ENCODE measurements at regions of chr6 and their contacts with region 1.

Region 1: DNA sequence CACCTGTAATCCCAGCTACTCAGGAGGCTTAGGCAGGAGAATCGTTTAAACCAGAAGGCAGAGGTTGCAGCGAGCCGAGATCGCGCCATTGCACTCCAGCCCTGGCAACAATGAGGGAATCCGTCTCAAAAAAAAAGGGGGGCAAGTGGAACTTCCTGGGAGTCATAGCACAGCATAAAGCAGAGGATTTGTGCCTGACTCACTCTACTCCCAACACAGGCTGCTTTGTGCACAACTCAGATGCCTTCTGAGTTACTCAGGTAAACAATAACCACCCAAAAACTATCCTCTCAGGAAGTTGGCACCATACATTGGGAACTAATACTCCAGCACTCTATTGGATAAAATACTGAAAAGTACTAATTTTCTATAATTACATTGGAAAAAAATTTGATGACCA is 2.5 kb upstream of the TMEM244 start:
- DNase-seq: no peak
- ATAC-seq: no peak
- H3K4me3 ChIP-seq: no peak overlapping the region
- H3K27ac ChIP-seq: no peak overlapping the region
- H3K4me1 ChIP-seq: no peaks in the 10 kb centered on the region
- H3K27me3 ChIP-seq: no peaks in the 10 kb centered on the region
- CTCF ChIP-seq: no peak
- EP300 ChIP-seq: no peak
- POLR2A ChIP-seq: no peak
- RAD21 ChIP-seq: no peak

Region 2: GRCh38 chr6:129567374-129567773 is 296.3 kb before region 1 on chr6:
- CTCF ChIA-PET with region 1: no interaction called
- POLR2A ChIA-PET with region 1: no interaction called
- in situ Hi-C with region 1: no loop called
- intact Hi-C with region 1: no loop called
- DNase-seq: peak; percentile 28 to 58 (median 34)
- ATAC-seq: peak; percentile 91
- H3K4me3 ChIP-seq: no peak overlapping the region
- H3K27ac ChIP-seq: no peak overlapping the region
- H3K4me1 ChIP-seq: peaks cover 0 to 7% of the 10 kb centered on the region in 2 experiments; a peak in 2 of 5 replicates
- H3K27me3 ChIP-seq: no peaks in the 10 kb centered on the region
- CTCF ChIP-seq: peak; percentile 40 to 71 (median 68); a peak in 5 of 6 replicates
- EP300 ChIP-seq: no peak
- POLR2A ChIP-seq: no peak
- RAD21 ChIP-seq: peak; percentile 66 to 81

Region 3: DNA sequence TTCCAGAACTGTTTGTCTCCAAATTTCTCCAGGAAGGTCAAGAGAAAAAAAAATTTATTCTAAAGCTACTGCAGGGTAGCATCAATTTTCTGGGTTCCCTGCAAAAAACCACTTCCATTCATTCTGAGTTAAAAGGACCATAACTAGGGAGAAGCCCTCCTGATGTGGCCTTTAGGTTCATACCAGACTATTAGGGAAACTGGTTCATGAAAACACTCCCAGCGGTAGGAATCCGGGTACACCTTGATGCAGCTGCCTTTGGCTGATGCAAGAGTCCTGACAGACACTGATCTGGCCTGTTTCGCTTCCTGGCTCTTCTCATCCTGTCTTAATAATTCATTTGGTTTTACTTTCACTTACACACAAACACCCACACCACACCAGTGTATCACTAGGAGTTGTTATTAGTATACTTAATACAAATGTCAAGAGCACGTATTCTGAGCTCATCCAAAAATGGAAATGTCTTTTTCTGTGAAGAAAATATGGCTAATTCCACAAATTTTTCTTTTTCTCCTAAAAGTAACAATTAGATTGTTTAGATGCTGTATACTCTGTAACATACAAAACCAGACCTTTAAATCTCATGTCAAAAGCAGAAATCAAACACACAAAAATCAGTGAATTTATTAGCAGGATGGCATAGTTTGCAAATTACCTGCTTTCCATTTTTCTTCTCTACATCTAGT is 115.3 kb before region 1 on chr6:
- CTCF ChIA-PET with region 1: no interaction called
- POLR2A ChIA-PET with region 1: no interaction called
- in situ Hi-C with region 1: no loop called
- intact Hi-C with region 1: loop called (anchors 1 kb)
- DNase-seq: peak; percentile 13 to 71 (median 30)
- ATAC-seq: peak; percentile 90
- H3K4me3 ChIP-seq: no peak overlapping the region
- H3K27ac ChIP-seq: peak overlapping the region; percentile 18
- H3K4me1 ChIP-seq: peaks cover 0 to 42% of the 10 kb centered on the region in 2 experiments; a peak in 4 of 5 replicates
- H3K27me3 ChIP-seq: no peaks in the 10 kb centered on the region
- CTCF ChIP-seq: peak in 1 of 3 experiments; percentile 13; a peak in 1 of 6 replicates
- EP300 ChIP-seq: peak; percentile 87
- POLR2A ChIP-seq: no peak
- RAD21 ChIP-seq: peak; percentile 29 to 32

Region 4: GRCh38 chr6:129766959-129767728 is 96.5 kb before region 1 on chr6:
- CTCF ChIA-PET with region 1: no interaction called
- POLR2A ChIA-PET with region 1: no interaction called
- in situ Hi-C with region 1: no loop called
- intact Hi-C with region 1: loop called (anchors 5 kb)
- DNase-seq: peak; percentile 25 to 71 (median 37)
- ATAC-seq: peak; percentile 88
- H3K4me3 ChIP-seq: peak overlapping the region; percentile 42
- H3K27ac ChIP-seq: no peak overlapping the region
- H3K4me1 ChIP-seq: peaks cover 6 to 17% of the 10 kb centered on the region in 2 experiments; a peak in 4 of 5 replicates
- H3K27me3 ChIP-seq: no peaks in the 10 kb centered on the region
- CTCF ChIP-seq: no peak
- EP300 ChIP-seq: no peak
- POLR2A ChIP-seq: no peak
- RAD21 ChIP-seq: no peak

Region 5: DNA sequence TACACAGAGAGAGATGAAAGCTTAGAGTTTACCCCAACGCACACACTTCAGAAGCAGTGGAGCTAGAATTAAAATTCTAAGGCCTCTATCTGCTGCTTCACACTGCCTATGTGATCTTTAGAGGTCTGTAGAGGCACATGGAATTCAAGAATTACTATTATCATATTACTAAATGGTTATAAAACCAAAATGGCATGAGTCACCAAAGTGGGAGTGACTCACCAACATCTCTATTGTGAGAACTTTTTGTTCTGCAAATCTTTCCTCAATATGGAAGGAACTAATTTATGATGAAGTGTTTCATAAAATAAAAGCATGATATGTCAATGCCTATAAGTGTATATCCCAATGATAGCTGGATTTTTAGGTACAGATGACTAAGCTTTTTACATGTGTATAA is 25.9 kb after region 1 on chr6:
- CTCF ChIA-PET with region 1: no interaction called
- POLR2A ChIA-PET with region 1: no interaction called
- in situ Hi-C with region 1: no loop called
- intact Hi-C with region 1: no loop called
- DNase-seq: no peak
- ATAC-seq: no peak
- H3K4me3 ChIP-seq: no peak overlapping the region
- H3K27ac ChIP-seq: no peak overlapping the region
- H3K4me1 ChIP-seq: peaks cover 0 to 4% of the 10 kb centered on the region in 2 experiments; a peak in 1 of 5 replicates
- H3K27me3 ChIP-seq: no peaks in the 10 kb centered on the region
- CTCF ChIP-seq: no peak
- EP300 ChIP-seq: no peak
- POLR2A ChIP-seq: no peak
- RAD21 ChIP-seq: no peak

Region 6: DNA sequence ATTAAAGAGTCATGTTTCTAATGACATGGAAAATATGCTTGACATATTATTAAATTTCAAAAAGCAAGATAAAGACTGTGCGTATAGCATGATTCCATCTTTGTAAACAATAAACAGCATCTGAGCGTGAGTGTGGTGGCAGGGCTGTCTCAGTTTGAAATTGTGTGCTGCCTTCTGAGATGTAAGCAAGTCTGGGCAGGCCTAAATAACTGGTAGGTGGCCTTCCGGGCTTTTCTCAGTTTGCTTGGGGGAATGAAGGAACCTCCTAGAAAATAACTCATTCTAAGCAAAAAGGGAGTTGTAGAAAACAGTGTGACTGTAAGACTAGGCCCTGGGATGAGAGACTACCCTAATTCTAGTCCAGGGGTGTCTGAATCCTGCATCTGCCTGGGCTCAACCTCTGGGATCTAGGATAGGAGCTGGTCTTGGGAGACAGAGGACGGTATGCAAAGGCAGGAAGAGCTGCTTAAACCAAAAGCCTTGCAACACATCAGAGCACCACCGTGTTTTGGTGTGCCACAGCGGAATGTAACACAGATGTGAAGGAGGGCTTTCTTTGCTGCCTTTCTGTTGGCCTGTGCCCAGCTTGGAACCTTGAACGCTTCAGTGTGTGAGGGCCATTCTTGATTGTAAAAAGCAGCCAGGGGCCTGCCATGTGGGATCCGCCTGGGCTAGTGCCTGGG is 91.2 kb after region 1 on chr6:
- CTCF ChIA-PET with region 1: no interaction called
- POLR2A ChIA-PET with region 1: no interaction called
- in situ Hi-C with region 1: no loop called
- intact Hi-C with region 1: no loop called
- DNase-seq: no peak
- ATAC-seq: no peak; the same call in 2 of the 3 replicates
- H3K4me3 ChIP-seq: no peak overlapping the region
- H3K27ac ChIP-seq: no peak overlapping the region
- H3K4me1 ChIP-seq: peaks cover 0 to 4% of the 10 kb centered on the region in 2 experiments; a peak in 1 of 5 replicates
- H3K27me3 ChIP-seq: peaks cover 0 to 17% of the 10 kb centered on the region in 2 experiments; a peak in 3 of 5 replicates
- CTCF ChIP-seq: no peak
- EP300 ChIP-seq: no peak
- POLR2A ChIP-seq: no peak
- RAD21 ChIP-seq: no peak

Measured in K562 (cell line).